Natural killer cell (primary cell): ENCODE measurements at regions of chr17 and their contacts with region 1.

Region 1: GRCh38 chr17:42554250-42555121 is 1.8 kb downstream of the HSD17B1 start:
- DNase-seq: peak; percentile 71 to 86
- ATAC-seq: peak; percentile 85 to 88 (median 88)
- H3K4me3 ChIP-seq: peak overlapping the region; percentile 86
- H3K4me3 Mint-ChIP-seq: peak overlapping the region; percentile 91
- H3K27ac ChIP-seq: peak overlapping the region; percentile 94
- H3K27ac Mint-ChIP-seq: peak overlapping the region; percentile 82 to 91
- H3K4me1 ChIP-seq: peaks cover 30% of the 10 kb centered on the region
- H3K4me1 Mint-ChIP-seq: peaks cover 10 to 35% of the 10 kb centered on the region in 2 donors
- H3K27me3 ChIP-seq: no peaks in the 10 kb centered on the region
- H3K27me3 Mint-ChIP-seq: no peaks in the 10 kb centered on the region
- CTCF ChIP-seq: no peak

Region 2: DNA sequence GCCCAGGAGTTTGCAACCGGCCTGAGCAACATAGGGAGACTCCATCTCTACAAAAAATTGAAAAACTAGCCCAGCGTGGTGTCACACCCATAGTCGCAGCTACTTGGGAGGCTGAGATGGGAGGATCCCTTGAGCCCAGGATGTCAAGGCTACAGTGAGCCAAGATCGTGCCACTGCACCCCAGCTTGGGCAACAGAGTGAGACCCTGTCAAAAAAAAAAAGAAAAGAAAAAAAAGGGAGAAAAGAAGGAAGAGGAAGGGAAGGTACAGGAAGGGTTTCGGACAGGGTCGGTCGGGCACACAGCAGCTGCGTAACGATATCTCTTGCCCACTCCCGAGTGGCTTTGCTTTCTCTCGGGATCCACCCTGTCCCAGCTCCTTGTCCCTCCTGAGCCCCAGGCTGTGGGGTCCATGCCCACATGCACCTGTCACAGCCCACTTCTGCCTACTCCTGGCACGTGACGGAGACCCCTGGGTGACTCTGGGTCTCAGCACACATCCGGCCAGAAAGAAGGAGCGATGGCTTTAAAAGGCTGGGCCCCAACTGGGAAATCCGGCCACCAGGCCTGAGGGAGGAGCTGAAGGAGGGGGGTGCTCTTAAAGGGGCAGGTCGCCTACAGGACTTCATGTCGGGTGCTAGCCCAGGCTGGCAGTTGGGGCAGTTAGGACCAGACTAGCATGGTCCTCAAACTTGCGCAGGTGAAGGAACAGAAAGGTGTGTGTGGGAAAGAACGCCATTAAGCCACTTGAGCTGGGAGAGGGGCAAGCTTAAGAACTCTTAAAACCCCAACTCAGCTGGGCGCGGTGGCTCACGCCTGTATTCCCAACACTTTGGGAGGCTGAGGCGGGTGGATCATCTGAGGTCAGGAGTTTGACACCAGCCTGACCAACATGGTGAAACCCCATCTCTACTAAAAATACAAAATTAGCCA is 360.3 kb before region 1 on chr17 and contains the start of gene GHDC:
- intact Hi-C with region 1: no loop called
- DNase-seq: peak; percentile 81 to 85
- ATAC-seq: peak; percentile 94 to 99 (median 99)
- H3K4me3 ChIP-seq: peak within 1 kb of the TSS; percentile 91
- H3K4me3 Mint-ChIP-seq: peak within 1 kb of the TSS; percentile 97
- H3K27ac ChIP-seq: peak within 1 kb of the TSS; percentile 72
- H3K27ac Mint-ChIP-seq: peak within 1 kb of the TSS; percentile 90 to 97
- H3K4me1 ChIP-seq: peaks cover 27% of the 10 kb centered on the region
- H3K4me1 Mint-ChIP-seq: peaks cover 15 to 27% of the 10 kb centered on the region in 2 donors
- H3K27me3 ChIP-seq: no peaks in the 10 kb centered on the region
- H3K27me3 Mint-ChIP-seq: no peaks in the 10 kb centered on the region
- CTCF ChIP-seq: no peak
- total RNA-seq, gene GHDC: 19.5 to 24.6 (median 22.8) TPM

Region 3: GRCh38 chr17:42536048-42536371 is 18.5 kb before region 1 on chr17 and contains the start of gene NAGLU:
- intact Hi-C with region 1: loop called (anchors 2 kb)
- DNase-seq: peak; percentile 84 to 85
- ATAC-seq: peak; percentile 88 to 92 (median 88)
- H3K4me3 ChIP-seq: peak within 1 kb of the TSS; percentile 54
- H3K4me3 Mint-ChIP-seq: peak within 1 kb of the TSS; percentile 88
- H3K27ac ChIP-seq: peak within 1 kb of the TSS; percentile 77
- H3K27ac Mint-ChIP-seq: peak within 1 kb of the TSS; percentile 75 to 83
- H3K4me1 ChIP-seq: peaks cover 37% of the 10 kb centered on the region
- H3K4me1 Mint-ChIP-seq: peaks cover 27 to 50% of the 10 kb centered on the region in 2 donors
- H3K27me3 ChIP-seq: no peaks in the 10 kb centered on the region
- H3K27me3 Mint-ChIP-seq: no peaks in the 10 kb centered on the region
- CTCF ChIP-seq: no peak
- total RNA-seq, gene NAGLU: 34.8 to 44.3 (median 36.4) TPM

Region 4: GRCh38 chr17:42659079-42659931 is 104.8 kb after region 1 on chr17 and contains the start of gene TUBG2:
- intact Hi-C with region 1: no loop called
- DNase-seq: peak in 1 of 2 donors; percentile 83
- ATAC-seq: peak; percentile 71 to 87 (median 84)
- H3K4me3 ChIP-seq: peak within 1 kb of the TSS; percentile 72
- H3K4me3 Mint-ChIP-seq: peak within 1 kb of the TSS; percentile 87
- H3K27ac ChIP-seq: no peak within 1 kb of the TSS
- H3K27ac Mint-ChIP-seq: peak within 1 kb of the TSS in 1 of 2 donors; percentile 73
- H3K4me1 ChIP-seq: peaks cover 14% of the 10 kb centered on the region
- H3K4me1 Mint-ChIP-seq: peaks cover 17 to 21% of the 10 kb centered on the region in 2 donors
- H3K27me3 ChIP-seq: peaks cover under 1% of the 10 kb centered on the region
- H3K27me3 Mint-ChIP-seq: peaks cover 9 to 14% of the 10 kb centered on the region in 2 donors
- CTCF ChIP-seq: no peak
- total RNA-seq, gene TUBG2: 7.8 to 14.2 (median 9.6) TPM